ENCODE measurements at regions of chr5 and their contacts with region 1.

Region 1: GRCh38 chr5:99060306-99061261 is 131.8 kb upstream of the CHD1 start:
- DNase-seq: peak; percentile 77
- H3K4me3 ChIP-seq: no peak overlapping the region
- H3K27ac ChIP-seq: no peak overlapping the region
- H3K4me1 ChIP-seq: peaks cover 3% of the 10 kb centered on the region
- H3K27me3 ChIP-seq: no peaks in the 10 kb centered on the region
- CTCF ChIP-seq: peak; percentile 64 to 86
- POLR2A ChIP-seq: no peak

Region 2: DNA sequence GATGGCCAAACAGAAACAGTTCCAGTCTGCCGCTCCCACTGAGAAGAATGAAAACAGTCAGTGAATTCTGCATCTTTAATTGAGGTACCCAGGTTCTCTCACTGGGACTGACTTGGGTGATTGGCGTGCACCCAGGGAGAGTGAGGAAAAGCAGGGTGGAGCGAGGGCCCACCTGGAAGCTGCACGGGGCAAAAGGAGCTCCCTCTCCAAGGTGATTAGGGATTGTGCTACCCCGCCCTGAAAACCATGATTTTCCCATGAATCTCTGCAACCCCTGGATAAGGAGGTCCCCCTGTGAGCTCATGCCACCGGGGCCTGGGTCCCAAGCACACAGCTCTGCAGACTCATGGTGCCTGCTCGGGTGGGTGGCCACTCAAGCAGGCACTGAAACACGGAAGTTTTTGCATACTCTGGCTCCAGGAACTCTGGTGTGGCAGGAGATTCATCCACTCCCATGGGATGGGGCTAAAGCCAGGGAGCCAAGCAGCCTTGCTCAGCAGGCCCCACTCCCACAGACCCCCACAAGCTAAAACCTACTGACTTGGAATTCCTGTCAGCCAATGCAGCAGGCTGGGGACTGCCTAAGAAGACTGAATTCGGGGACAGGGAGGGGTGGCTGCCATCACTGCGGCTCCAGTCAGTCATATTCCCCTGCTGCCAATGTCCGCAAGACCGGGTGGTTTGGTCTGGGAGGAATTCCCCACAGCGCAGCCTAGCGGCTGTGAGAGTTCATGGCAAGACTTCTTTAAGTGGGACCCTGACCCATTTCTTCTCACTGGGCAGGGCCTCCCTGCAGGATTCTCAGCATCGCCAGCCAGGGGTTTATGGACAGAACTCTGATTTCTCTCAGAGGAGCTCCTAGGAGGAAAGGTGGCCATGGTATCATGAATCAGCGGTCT is 939.3 kb before region 1 on chr5:
- CTCF ChIA-PET with region 1: no interaction called
- POLR2A ChIA-PET with region 1: no interaction called
- dilution Hi-C with region 1: no loop called
- intact Hi-C with region 1: no loop called
- DNase-seq: no peak
- H3K4me3 ChIP-seq: no peak overlapping the region
- H3K27ac ChIP-seq: no peak overlapping the region
- H3K4me1 ChIP-seq: no peaks in the 10 kb centered on the region
- H3K27me3 ChIP-seq: no peaks in the 10 kb centered on the region
- CTCF ChIP-seq: no peak
- POLR2A ChIP-seq: no peak

Region 3: GRCh38 chr5:98796197-98796972 is 264.2 kb before region 1 on chr5:
- CTCF ChIA-PET with region 1: no interaction called
- POLR2A ChIA-PET with region 1: no interaction called
- dilution Hi-C with region 1: no loop called
- intact Hi-C with region 1: loop called (anchors 5 kb)
- DNase-seq: peak; percentile 74
- H3K4me3 ChIP-seq: no peak overlapping the region
- H3K27ac ChIP-seq: peak overlapping the region; percentile 43
- H3K4me1 ChIP-seq: no peaks in the 10 kb centered on the region
- H3K27me3 ChIP-seq: no peaks in the 10 kb centered on the region
- CTCF ChIP-seq: peak; percentile 68 to 70
- POLR2A ChIP-seq: no peak

Region 4: GRCh38 chr5:98891591-98891990 is 169.0 kb before region 1 on chr5:
- CTCF ChIA-PET with region 1: interaction called, 10 read pairs
- POLR2A ChIA-PET with region 1: no interaction called
- dilution Hi-C with region 1: no loop called
- intact Hi-C with region 1: no loop called
- DNase-seq: no peak
- H3K4me3 ChIP-seq: no peak overlapping the region
- H3K27ac ChIP-seq: no peak overlapping the region
- H3K4me1 ChIP-seq: no peaks in the 10 kb centered on the region
- H3K27me3 ChIP-seq: no peaks in the 10 kb centered on the region
- CTCF ChIP-seq: no peak
- POLR2A ChIP-seq: no peak

Region 5: GRCh38 chr5:98905857-98906690 is 154.5 kb before region 1 on chr5:
- CTCF ChIA-PET with region 1: interaction called, 47 read pairs
- POLR2A ChIA-PET with region 1: no interaction called
- dilution Hi-C with region 1: no loop called
- intact Hi-C with region 1: loop called (anchors 1 kb)
- DNase-seq: peak; percentile 66
- H3K4me3 ChIP-seq: no peak overlapping the region
- H3K27ac ChIP-seq: peak overlapping the region; percentile 30
- H3K4me1 ChIP-seq: peaks cover 28% of the 10 kb centered on the region
- H3K27me3 ChIP-seq: no peaks in the 10 kb centered on the region
- CTCF ChIP-seq: peak; percentile 25 to 31
- POLR2A ChIP-seq: no peak

Region 6: GRCh38 chr5:98928873-98929696 is 131.5 kb before region 1 on chr5 and contains the start of gene CHD1:
- CTCF ChIA-PET with region 1: interaction called, 3 read pairs
- POLR2A ChIA-PET with region 1: no interaction called
- dilution Hi-C with region 1: no loop called
- intact Hi-C with region 1: loop called (anchors 2 kb)
- DNase-seq: peak; percentile 97
- H3K4me3 ChIP-seq: peak within 1 kb of the TSS; percentile 63 to 86 (median 81)
- H3K27ac ChIP-seq: peak within 1 kb of the TSS; percentile 95
- H3K4me1 ChIP-seq: peaks cover 18% of the 10 kb centered on the region
- H3K27me3 ChIP-seq: no peaks in the 10 kb centered on the region
- CTCF ChIP-seq: no peak
- POLR2A ChIP-seq: peak; percentile 89
- total RNA-seq, gene CHD1: 44.3 and 48.9 TPM in 2 replicates

Region 7: DNA sequence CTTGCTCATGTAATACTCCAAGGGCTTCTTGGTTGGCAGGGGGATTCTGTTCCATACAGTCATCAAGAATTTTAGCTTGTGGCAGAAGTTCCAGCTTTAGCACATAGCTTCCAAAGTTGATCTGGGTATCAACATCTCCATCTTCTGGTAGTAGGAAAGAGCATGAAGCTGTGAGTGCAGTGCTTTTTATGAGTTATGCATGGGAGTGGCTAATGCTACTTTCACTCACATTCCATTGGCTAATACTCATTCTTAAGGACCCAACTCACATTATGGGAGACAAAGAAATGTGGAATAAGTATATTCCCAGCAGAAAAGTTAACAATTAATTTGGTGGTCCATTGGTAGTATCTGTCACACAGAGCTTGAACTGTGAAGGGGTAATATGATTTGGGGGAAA is 62.4 kb after region 1 on chr5:
- CTCF ChIA-PET with region 1: no interaction called
- POLR2A ChIA-PET with region 1: no interaction called
- dilution Hi-C with region 1: no loop called
- intact Hi-C with region 1: no loop called
- DNase-seq: no peak
- H3K4me3 ChIP-seq: no peak overlapping the region
- H3K27ac ChIP-seq: no peak overlapping the region
- H3K4me1 ChIP-seq: no peaks in the 10 kb centered on the region
- H3K27me3 ChIP-seq: no peaks in the 10 kb centered on the region
- CTCF ChIP-seq: no peak
- POLR2A ChIP-seq: no peak